Motor neuron (in vitro differentiated cells): ENCODE measurements at regions of chr16 and their contacts with region 1.

Region 1: GRCh38 chr16:57757326-57757786 is 21.8 kb downstream of the KATNB1 start:
- ATAC-seq: peak; percentile 66 to 98 (median 78)
- H3K4me3 ChIP-seq: no peak overlapping the region
- H3K27ac ChIP-seq: no peak overlapping the region
- H3K4me1 ChIP-seq: no peaks in the 10 kb centered on the region

Region 2: GRCh38 chr16:57863434-57864160 is 106.2 kb after region 1 on chr16:
- in situ Hi-C with region 1: loop called in 1 of 9 experiments (anchors 10 kb)
- ATAC-seq: peak; percentile 40 to 99 (median 61)
- H3K4me3 ChIP-seq: no peak overlapping the region
- H3K27ac ChIP-seq: no peak overlapping the region
- H3K4me1 ChIP-seq: peaks cover 26 to 34% of the 10 kb centered on the region in 2 donors